ENCODE measurements at regions of chr14 and their contacts with region 1.

Region 1: GRCh38 chr14:67704484-67705089 is 2.9 kb downstream of the RDH12 start:
- H3K4me3 ChIP-seq: no peak overlapping the region
- H3K27ac ChIP-seq: no peak overlapping the region
- H3K4me1 ChIP-seq: no peaks in the 10 kb centered on the region
- CTCF ChIP-seq: peak; percentile 54

Region 2: GRCh38 chr14:66986277-66986676 is 718.3 kb before region 1 on chr14:
- CTCF ChIA-PET with region 1: no interaction called
- POLR2A ChIA-PET with region 1: no interaction called
- H3K4me3 ChIP-seq: no peak overlapping the region
- H3K27ac ChIP-seq: no peak overlapping the region
- H3K4me1 ChIP-seq: no peaks in the 10 kb centered on the region
- CTCF ChIP-seq: no peak

Region 3: GRCh38 chr14:67571272-67571850 is 133.2 kb before region 1 on chr14:
- CTCF ChIA-PET with region 1: interaction called, 22 read pairs
- POLR2A ChIA-PET with region 1: interaction called, 5 read pairs
- H3K4me3 ChIP-seq: no peak overlapping the region
- H3K27ac ChIP-seq: no peak overlapping the region
- H3K4me1 ChIP-seq: no peaks in the 10 kb centered on the region
- CTCF ChIP-seq: peak; percentile 62

Region 4: GRCh38 chr14:67599698-67600561 is 104.7 kb before region 1 on chr14 and contains the start of gene PIGH:
- CTCF ChIA-PET with region 1: interaction called, 11 read pairs
- POLR2A ChIA-PET with region 1: interaction called, 3 read pairs
- H3K4me3 ChIP-seq: peak within 1 kb of the TSS; percentile 95
- H3K27ac ChIP-seq: peak within 1 kb of the TSS; percentile 76
- H3K4me1 ChIP-seq: no peaks in the 10 kb centered on the region
- CTCF ChIP-seq: peak; percentile 95

Region 5: GRCh38 chr14:67619446-67620216 is 85.0 kb before region 1 on chr14 and contains the start of gene ARG2:
- CTCF ChIA-PET with region 1: interaction called, 47 read pairs
- POLR2A ChIA-PET with region 1: no interaction called
- H3K4me3 ChIP-seq: peak within 1 kb of the TSS; percentile 80
- H3K27ac ChIP-seq: peak within 1 kb of the TSS; percentile 38; the same call in 1 of the 2 replicates
- H3K4me1 ChIP-seq: peaks cover 13% of the 10 kb centered on the region
- CTCF ChIP-seq: peak; percentile 56; the same call in 1 of the 2 replicates

Region 6: GRCh38 chr14:67717048-67717447 is 12.5 kb after region 1 on chr14:
- CTCF ChIA-PET with region 1: interaction called, 31 read pairs
- POLR2A ChIA-PET with region 1: interaction called, 6 read pairs
- H3K4me3 ChIP-seq: no peak overlapping the region
- H3K27ac ChIP-seq: no peak overlapping the region
- H3K4me1 ChIP-seq: no peaks in the 10 kb centered on the region
- CTCF ChIP-seq: no peak